PC-9 (cell line): ENCODE measurements at regions of chr20 and their contacts with region 1.

Region 1: DNA sequence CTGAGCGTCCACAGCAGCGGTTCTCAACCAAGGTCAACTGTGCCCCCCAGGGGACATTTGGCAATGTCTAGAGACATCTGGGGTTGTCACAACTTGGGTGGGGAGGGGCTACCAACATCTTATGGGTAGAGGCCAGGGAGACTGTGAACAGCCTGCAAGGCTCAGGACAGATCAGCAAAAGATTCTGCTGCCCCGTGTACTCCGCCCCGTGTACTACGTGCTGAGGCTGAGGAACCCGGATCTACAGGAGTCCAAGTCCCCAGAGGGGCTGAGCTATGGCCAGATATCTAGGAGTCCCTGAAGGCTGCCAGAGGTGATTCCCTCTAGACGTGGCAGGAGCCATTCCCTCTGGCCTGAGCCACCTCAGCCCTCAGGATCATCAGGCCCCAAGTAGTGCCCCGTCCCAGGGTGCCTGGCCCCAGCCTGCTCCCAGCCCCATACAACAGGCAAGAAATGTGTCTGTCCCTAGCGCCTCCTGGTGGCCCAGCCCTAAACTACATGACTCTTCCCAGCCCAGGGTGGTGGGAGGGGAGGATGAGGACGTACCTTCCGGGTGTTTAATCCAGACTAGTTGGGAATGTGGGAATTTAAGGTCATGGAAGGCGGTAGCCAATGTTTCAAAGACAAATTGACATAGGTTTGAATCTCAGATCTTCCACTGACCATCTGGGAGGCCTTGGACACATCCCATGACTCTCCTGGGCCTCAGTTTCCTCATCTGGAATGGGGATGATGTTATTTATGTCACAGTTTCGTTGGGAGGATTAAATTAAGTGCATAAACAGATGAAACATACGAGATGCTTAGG is 49.5 kb upstream of the PTPN1 start:
- DNase-seq: peak; percentile 70 to 90
- H3K4me3 ChIP-seq: no peak overlapping the region
- H3K27ac ChIP-seq: no peak overlapping the region
- H3K4me1 ChIP-seq: peaks cover 43% of the 10 kb centered on the region
- H3K27me3 ChIP-seq: no peaks in the 10 kb centered on the region
- CTCF ChIP-seq: peak; percentile 99

Region 2: GRCh38 chr20:50070991-50071888 is 389.4 kb before region 1 on chr20:
- CTCF ChIA-PET with region 1: interaction called, 3 read pairs
- POLR2A ChIA-PET with region 1: no interaction called
- intact Hi-C with region 1: loop called (anchors 10 kb)
- DNase-seq: peak; percentile 69 to 96
- H3K4me3 ChIP-seq: peak overlapping the region; percentile 66
- H3K27ac ChIP-seq: no peak overlapping the region
- H3K4me1 ChIP-seq: 0 out of 2 replicates have a peak, but pooled peaks cover 5% of the 10 kb centered on the region
- H3K27me3 ChIP-seq: no peaks in the 10 kb centered on the region
- CTCF ChIP-seq: peak; percentile 100

Region 3: GRCh38 chr20:50242529-50242852 is 218.2 kb before region 1 on chr20:
- CTCF ChIA-PET with region 1: no interaction called
- POLR2A ChIA-PET with region 1: no interaction called
- intact Hi-C with region 1: no loop called
- DNase-seq: no peak
- H3K4me3 ChIP-seq: no peak overlapping the region
- H3K27ac ChIP-seq: peak overlapping the region; percentile 99
- H3K4me1 ChIP-seq: peaks cover 96% of the 10 kb centered on the region
- H3K27me3 ChIP-seq: no peaks in the 10 kb centered on the region
- CTCF ChIP-seq: no peak

Region 4: GRCh38 chr20:50335105-50335504 is 125.6 kb before region 1 on chr20:
- CTCF ChIA-PET with region 1: no interaction called
- POLR2A ChIA-PET with region 1: interaction called, 10 read pairs
- intact Hi-C with region 1: loop called (anchors 2 kb)
- DNase-seq: peak; percentile 54 to 87
- H3K4me3 ChIP-seq: no peak overlapping the region
- H3K27ac ChIP-seq: peak overlapping the region; percentile 92
- H3K4me1 ChIP-seq: peaks cover 73% of the 10 kb centered on the region
- H3K27me3 ChIP-seq: no peaks in the 10 kb centered on the region
- CTCF ChIP-seq: no peak

Region 5: DNA sequence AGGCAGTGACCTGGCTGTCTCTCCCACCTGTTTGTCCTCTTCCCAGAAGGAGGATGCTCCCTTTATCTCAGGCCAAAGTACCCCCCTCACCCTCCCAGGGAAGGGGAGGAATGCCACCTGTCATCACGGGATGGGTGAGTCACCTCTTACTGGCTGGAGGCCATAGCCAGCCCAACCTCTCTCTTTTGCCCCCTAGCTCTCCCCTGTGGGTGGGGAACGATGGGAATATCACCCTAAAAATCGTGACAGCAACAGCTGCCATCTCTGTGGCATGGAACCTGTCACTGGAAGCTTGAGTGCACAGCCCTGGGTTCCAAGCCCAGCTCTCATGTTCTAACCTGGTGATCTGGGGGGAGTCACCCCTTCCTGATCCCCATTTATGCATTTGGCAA is 87.9 kb before region 1 on chr20:
- CTCF ChIA-PET with region 1: no interaction called
- POLR2A ChIA-PET with region 1: no interaction called
- intact Hi-C with region 1: loop called (anchors 5 kb)
- DNase-seq: peak; percentile 68 to 71
- H3K4me3 ChIP-seq: no peak overlapping the region
- H3K27ac ChIP-seq: peak overlapping the region; percentile 21
- H3K4me1 ChIP-seq: peaks cover 60% of the 10 kb centered on the region
- H3K27me3 ChIP-seq: no peaks in the 10 kb centered on the region
- CTCF ChIP-seq: no peak

Region 6: GRCh38 chr20:50478162-50479036 is 17.7 kb after region 1 on chr20:
- CTCF ChIA-PET with region 1: no interaction called
- POLR2A ChIA-PET with region 1: interaction called, 10 read pairs
- intact Hi-C with region 1: no loop called
- DNase-seq: no peak
- H3K4me3 ChIP-seq: no peak overlapping the region
- H3K27ac ChIP-seq: no peak overlapping the region
- H3K4me1 ChIP-seq: peaks cover 8% of the 10 kb centered on the region
- H3K27me3 ChIP-seq: no peaks in the 10 kb centered on the region
- CTCF ChIP-seq: peak; percentile 39; the same call in 1 of the 2 replicates

Region 7: DNA sequence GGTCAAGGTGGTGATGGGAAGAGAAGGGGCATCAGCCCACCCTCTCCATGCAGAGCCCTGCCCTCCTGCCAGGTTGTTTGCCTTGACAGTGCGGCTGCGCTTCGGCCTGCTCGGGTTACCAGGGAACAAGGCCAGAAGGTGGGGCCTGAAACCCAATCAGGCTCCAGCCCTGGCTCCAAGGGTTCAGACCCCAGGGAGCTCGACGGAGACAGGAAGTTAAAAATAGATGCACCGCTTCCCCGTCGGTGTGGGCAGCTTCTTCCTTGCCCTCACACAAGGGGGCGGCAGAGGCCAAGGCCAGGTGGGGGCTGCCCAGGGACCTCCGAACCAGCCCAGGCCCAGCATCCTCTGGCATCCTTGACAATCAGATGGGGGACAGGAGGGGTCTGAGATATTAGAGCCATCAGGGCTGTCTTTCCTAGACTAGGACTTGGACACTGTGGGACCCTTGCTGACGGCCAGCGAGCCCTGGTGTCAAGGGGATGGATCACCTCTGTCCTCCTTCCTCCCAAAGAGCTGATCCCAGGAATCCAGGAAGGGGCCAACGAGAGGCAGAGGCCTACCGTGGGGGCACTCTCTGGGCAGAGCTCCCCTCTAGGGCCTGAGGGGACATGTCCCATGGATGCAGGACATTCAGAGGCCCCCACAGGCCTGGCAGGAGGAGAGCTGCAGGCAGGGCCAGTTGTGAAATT is 165.5 kb after region 1 on chr20:
- CTCF ChIA-PET with region 1: interaction called, 12 read pairs
- POLR2A ChIA-PET with region 1: no interaction called
- intact Hi-C with region 1: no loop called
- DNase-seq: peak in 1 of 2 experiments; percentile 65
- H3K4me3 ChIP-seq: no peak overlapping the region
- H3K27ac ChIP-seq: no peak overlapping the region
- H3K4me1 ChIP-seq: peaks cover 45% of the 10 kb centered on the region
- H3K27me3 ChIP-seq: no peaks in the 10 kb centered on the region
- CTCF ChIP-seq: peak; percentile 72